CD4-positive, alpha-beta T cell (primary cell): ENCODE measurements at regions of chr10 and their contacts with region 1.

Region 1: GRCh38 chr10:124791378-124792348 is at the start of gene EEF1AKMT2:
- DNase-seq: peak; percentile 61 to 92 (median 78)
- ATAC-seq: peak; percentile 92
- H3K4me3 ChIP-seq: peak within 1 kb of the TSS; percentile 80
- H3K4me3 Mint-ChIP-seq: peak within 1 kb of the TSS; percentile 99
- H3K27ac ChIP-seq: peak within 1 kb of the TSS; percentile 65 to 74
- H3K27ac Mint-ChIP-seq: peak within 1 kb of the TSS; percentile 92
- H3K4me1 ChIP-seq: peaks cover 15% of the 10 kb centered on the region
- H3K4me1 Mint-ChIP-seq: peaks cover 22% of the 10 kb centered on the region
- H3K27me3 ChIP-seq: no peaks in the 10 kb centered on the region
- H3K27me3 Mint-ChIP-seq: no peaks in the 10 kb centered on the region
- CTCF ChIP-seq: no peak
- total RNA-seq, gene EEF1AKMT2: 14.4 to 16.7 TPM

Region 2: DNA sequence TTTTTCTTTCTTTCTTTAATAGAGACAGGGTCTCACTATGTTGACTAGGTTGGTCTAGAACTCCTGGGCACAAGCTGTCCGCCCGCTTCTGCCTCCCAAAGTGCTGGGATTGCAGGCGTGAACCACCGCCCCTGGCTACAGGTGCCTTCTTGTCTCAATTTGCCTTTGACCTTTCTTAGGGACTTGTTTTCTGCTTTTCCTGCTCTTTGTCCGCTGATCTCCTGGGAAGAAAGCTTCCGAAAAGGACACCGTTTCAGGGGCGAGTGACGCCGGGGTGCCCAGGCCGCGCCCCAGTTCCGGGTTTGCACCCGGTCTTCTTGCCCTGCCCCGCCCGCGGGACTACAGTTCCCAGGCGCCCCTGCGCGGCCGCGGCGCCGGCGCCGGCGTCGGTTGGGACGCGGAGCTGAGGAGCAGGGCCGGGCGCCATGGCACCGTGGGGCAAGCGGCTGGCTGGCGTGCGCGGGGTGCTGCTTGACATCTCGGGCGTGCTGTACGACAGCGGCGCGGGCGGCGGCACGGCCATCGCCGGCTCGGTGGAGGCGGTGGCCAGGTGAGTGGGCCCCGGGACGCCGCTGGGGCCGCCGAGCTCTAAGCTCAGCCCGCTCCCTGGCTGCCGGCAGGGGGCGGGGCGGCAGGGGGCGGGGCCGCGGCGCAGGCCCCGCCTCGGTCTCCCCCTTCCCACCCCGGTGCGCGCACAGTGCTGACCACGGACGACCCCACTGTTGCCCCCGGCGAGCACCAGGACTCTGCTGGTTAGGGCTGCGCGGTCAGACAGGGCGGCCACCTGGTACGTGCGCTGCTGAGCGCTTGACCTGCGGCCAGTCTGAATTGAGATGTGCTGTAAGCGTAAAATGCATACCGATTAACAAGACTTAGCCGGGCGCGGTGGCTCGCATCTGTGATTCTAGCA is 330.0 kb before region 1 on chr10 and contains the start of gene LHPP:
- CTCF ChIA-PET with region 1: no interaction called
- POLR2A ChIA-PET with region 1: interaction called, 10 read pairs
- intact Hi-C with region 1: loop called in 1 of 2 experiments (anchors 5 kb)
- DNase-seq: peak; percentile 65 to 93 (median 84)
- ATAC-seq: peak; percentile 94
- H3K4me3 ChIP-seq: peak within 1 kb of the TSS; percentile 65
- H3K4me3 Mint-ChIP-seq: peak within 1 kb of the TSS; percentile 92
- H3K27ac ChIP-seq: peak within 1 kb of the TSS; percentile 53 to 67
- H3K27ac Mint-ChIP-seq: peak within 1 kb of the TSS; percentile 83
- H3K4me1 ChIP-seq: peaks cover 36% of the 10 kb centered on the region
- H3K4me1 Mint-ChIP-seq: peaks cover 27% of the 10 kb centered on the region
- H3K27me3 ChIP-seq: peaks cover 0 to 8% of the 10 kb centered on the region in 2 experiments
- H3K27me3 Mint-ChIP-seq: peaks cover 10% of the 10 kb centered on the region
- CTCF ChIP-seq: peak; percentile 17
- total RNA-seq, gene LHPP: 15.3 to 19.6 TPM

Region 3: GRCh38 chr10:124754227-124754626 is 37.4 kb before region 1 on chr10:
- CTCF ChIA-PET with region 1: no interaction called
- POLR2A ChIA-PET with region 1: no interaction called
- intact Hi-C with region 1: loop called (anchors 5 to 10 kb)
- DNase-seq: no peak
- ATAC-seq: no peak
- H3K4me3 ChIP-seq: no peak overlapping the region
- H3K4me3 Mint-ChIP-seq: no peak overlapping the region
- H3K27ac ChIP-seq: no peak overlapping the region
- H3K27ac Mint-ChIP-seq: no peak overlapping the region
- H3K4me1 ChIP-seq: no peaks in the 10 kb centered on the region
- H3K4me1 Mint-ChIP-seq: peaks cover 4% of the 10 kb centered on the region
- H3K27me3 ChIP-seq: no peaks in the 10 kb centered on the region
- H3K27me3 Mint-ChIP-seq: no peaks in the 10 kb centered on the region
- CTCF ChIP-seq: no peak

Region 4: DNA sequence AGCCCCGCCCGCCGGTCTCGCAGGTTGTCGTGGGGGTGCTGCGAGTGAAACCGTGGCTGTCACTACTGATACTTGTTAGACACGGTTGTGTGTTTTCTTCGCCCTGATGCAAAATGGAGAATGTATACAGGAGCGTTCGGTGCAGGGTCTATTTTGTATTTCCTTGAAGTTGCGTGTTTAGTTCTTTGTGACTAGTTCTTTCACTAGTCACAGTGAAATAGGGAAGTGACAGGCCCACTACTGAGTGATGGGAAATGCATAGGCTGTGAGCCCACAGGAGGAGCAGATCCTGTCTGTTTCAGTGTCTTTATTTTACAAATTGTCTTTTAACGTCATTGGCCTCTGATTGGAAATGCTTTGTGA is 10.6 kb after region 1 on chr10:
- CTCF ChIA-PET with region 1: interaction called, 4 read pairs
- POLR2A ChIA-PET with region 1: interaction called, 37 read pairs
- intact Hi-C with region 1: loop called in 1 of 2 experiments (anchors 1 kb)
- DNase-seq: peak in 3 of 14 experiments; percentile 11 to 53 (median 47)
- ATAC-seq: no peak
- H3K4me3 ChIP-seq: peak overlapping the region; percentile 95
- H3K4me3 Mint-ChIP-seq: peak overlapping the region; percentile 96
- H3K27ac ChIP-seq: peak overlapping the region; percentile 36 to 72
- H3K27ac Mint-ChIP-seq: peak overlapping the region; percentile 86
- H3K4me1 ChIP-seq: peaks cover 13% of the 10 kb centered on the region
- H3K4me1 Mint-ChIP-seq: peaks cover 22% of the 10 kb centered on the region
- H3K27me3 ChIP-seq: no peaks in the 10 kb centered on the region
- H3K27me3 Mint-ChIP-seq: no peaks in the 10 kb centered on the region
- CTCF ChIP-seq: no peak

Region 5: DNA sequence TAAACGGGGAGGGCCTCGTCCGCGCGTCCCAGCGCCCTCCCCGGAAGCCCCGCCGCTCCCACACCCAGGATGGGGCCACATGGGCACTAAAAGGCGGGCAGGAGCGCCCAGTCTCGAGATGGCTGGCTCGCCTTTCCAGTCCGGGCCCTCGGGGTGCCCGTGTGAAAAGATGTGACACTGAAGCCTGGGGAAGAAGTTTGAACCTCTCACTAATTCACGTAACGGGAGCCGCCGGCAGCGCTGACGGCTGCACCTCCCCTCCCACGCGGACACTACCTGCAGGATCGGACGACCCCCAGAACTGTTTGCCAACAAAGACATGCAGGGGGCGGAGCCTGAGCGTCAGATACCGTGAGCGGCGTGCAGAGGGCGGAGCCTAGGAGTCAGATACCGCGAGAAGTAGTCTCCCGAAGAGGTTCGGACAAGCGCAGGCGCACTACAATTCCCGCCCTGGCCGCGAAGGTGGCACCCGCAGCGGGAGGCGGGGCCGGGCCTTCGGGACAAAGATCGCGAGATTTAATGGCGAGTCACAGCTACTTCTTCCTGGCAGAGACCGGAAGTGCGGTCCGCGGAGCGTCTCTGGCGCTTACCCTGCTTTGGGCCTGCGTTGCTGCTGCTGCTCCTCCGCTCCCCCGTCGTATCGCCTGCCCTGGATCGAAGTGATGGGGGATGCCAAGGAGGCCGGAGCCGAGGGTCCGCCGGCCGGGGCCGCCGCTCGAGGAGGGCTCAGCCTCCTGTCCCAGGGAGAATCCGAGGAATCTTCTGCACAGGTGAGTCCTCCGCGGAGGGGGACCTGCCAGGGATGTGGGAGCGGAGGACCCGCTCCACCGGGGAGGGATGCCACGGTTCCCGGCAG is 927.7 kb after region 1 on chr10 and contains the start of gene EDRF1:
- CTCF ChIA-PET with region 1: no interaction called
- POLR2A ChIA-PET with region 1: no interaction called
- intact Hi-C with region 1: loop called in 1 of 2 experiments (anchors 10 kb)
- DNase-seq: peak; percentile 98 to 100 (median 99)
- ATAC-seq: peak; percentile 94
- H3K4me3 ChIP-seq: peak within 1 kb of the TSS; percentile 82
- H3K4me3 Mint-ChIP-seq: peak within 1 kb of the TSS; percentile 100
- H3K27ac ChIP-seq: peak within 1 kb of the TSS; percentile 79 to 89
- H3K27ac Mint-ChIP-seq: peak within 1 kb of the TSS; percentile 99
- H3K4me1 ChIP-seq: peaks cover 26% of the 10 kb centered on the region
- H3K4me1 Mint-ChIP-seq: peaks cover 39% of the 10 kb centered on the region
- H3K27me3 ChIP-seq: no peaks in the 10 kb centered on the region
- H3K27me3 Mint-ChIP-seq: no peaks in the 10 kb centered on the region
- CTCF ChIP-seq: no peak
- total RNA-seq, gene EDRF1: 39.0 to 39.8 TPM